ENCODE measurements at regions of chr17 and their contacts with region 1.

Region 1: GRCh38 chr17:40427002-40427491 is 9.4 kb upstream of the TOP2A start:
- DNase-seq: peak; percentile 49
- ATAC-seq: peak; percentile 93
- H3K4me3 Mint-ChIP-seq: peak overlapping the region; percentile 71
- H3K27ac Mint-ChIP-seq: peak overlapping the region; percentile 86
- H3K4me1 Mint-ChIP-seq: peaks cover 38% of the 10 kb centered on the region
- H3K27me3 Mint-ChIP-seq: peaks cover 17% of the 10 kb centered on the region

Region 2: DNA sequence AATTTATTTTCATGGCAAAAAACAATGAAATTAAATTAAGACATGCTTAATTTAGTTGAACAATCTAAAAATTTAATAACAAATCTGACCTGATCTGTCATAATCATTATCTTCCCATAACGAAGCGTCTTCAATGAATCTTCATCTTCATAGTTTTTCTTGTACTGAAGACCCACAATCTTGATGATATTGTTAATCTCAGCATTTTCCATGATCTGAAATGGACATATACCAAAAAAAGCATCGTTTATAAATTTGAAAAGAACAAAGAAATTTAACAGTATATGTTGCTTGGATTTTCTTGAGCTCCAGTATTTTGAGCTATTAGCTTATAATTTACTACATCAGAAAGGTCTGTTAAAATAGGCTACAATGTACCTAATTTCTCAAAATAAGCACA is 19.6 kb before region 1 on chr17:
- POLR2A ChIA-PET with region 1: no interaction called
- DNase-seq: no peak
- ATAC-seq: no peak
- H3K4me3 Mint-ChIP-seq: no peak overlapping the region
- H3K27ac Mint-ChIP-seq: no peak overlapping the region
- H3K4me1 Mint-ChIP-seq: peaks cover 23% of the 10 kb centered on the region
- H3K27me3 Mint-ChIP-seq: no peaks in the 10 kb centered on the region

Region 3: GRCh38 chr17:40437095-40437732 is 10.2 kb after region 1 on chr17:
- POLR2A ChIA-PET with region 1: interaction called, 11 read pairs
- DNase-seq: no peak
- ATAC-seq: peak; percentile 65
- H3K4me3 Mint-ChIP-seq: no peak overlapping the region
- H3K27ac Mint-ChIP-seq: peak overlapping the region; percentile 34
- H3K4me1 Mint-ChIP-seq: peaks cover 14% of the 10 kb centered on the region
- H3K27me3 Mint-ChIP-seq: peaks cover 6% of the 10 kb centered on the region

Region 4: GRCh38 chr17:40443583-40444327 is 16.7 kb after region 1 on chr17:
- POLR2A ChIA-PET with region 1: interaction called, 12 read pairs
- DNase-seq: peak; percentile 86
- ATAC-seq: peak; percentile 77
- H3K4me3 Mint-ChIP-seq: peak overlapping the region; percentile 89
- H3K27ac Mint-ChIP-seq: peak overlapping the region; percentile 95
- H3K4me1 Mint-ChIP-seq: peaks cover 44% of the 10 kb centered on the region
- H3K27me3 Mint-ChIP-seq: peaks cover 2% of the 10 kb centered on the region

Region 5: GRCh38 chr17:40542558-40543411 is 115.7 kb after region 1 on chr17:
- POLR2A ChIA-PET with region 1: interaction called, 10 read pairs
- DNase-seq: peak; percentile 41
- ATAC-seq: peak; percentile 8
- H3K4me3 Mint-ChIP-seq: peak overlapping the region; percentile 68
- H3K27ac Mint-ChIP-seq: peak overlapping the region; percentile 86
- H3K4me1 Mint-ChIP-seq: peaks cover 73% of the 10 kb centered on the region
- H3K27me3 Mint-ChIP-seq: peaks cover 2% of the 10 kb centered on the region

Measured in activated naive CD8-positive, alpha-beta T cell treated with anti-CD3 and anti-CD28 coated beads, Interleukin-2, amount 10 ng/mL, durations not matched to agents 7 days and 5 days (primary cell).